ENCODE measurements at regions of chr2 and their contacts with region 1.

Region 1: DNA sequence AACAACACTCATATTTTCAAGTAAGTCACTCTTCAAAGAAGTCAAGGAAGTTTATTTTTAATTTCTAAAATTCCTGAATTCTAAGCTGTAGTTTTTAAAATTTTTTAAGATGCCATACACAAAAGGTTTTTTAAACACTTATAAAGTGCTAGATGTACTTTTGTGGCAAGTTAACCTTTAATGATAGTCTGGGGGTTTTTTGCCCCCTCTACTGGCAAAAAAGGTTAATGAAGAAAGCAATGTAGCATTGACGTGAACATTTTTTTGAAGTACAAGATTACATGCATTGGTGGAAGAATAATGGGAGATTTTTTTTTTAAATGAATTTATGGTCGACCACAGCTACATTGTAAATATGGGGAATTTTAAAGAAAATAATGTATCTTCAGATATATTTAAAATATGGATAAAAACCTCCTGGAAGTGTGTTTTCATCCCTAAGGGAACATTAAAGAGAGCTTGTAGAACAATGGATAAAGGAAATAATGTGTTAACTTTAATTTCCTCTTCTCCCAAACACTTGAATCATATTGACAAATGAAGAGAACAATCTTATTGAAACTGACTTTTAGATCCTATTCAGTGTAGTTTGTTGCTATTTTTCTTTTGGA is 12.6 kb downstream of the ITPRID2 start:
- DNase-seq: no peak
- ATAC-seq: no peak
- H3K4me3 ChIP-seq: no peak overlapping the region
- H3K27ac ChIP-seq: no peak overlapping the region
- H3K4me1 ChIP-seq: peaks cover 0 to 2% of the 10 kb centered on the region in 2 donors
- H3K27me3 ChIP-seq: no peaks in the 10 kb centered on the region

Region 2: GRCh38 chr2:181517685-181518301 is 386.3 kb before region 1 on chr2:
- intact Hi-C with region 1: no loop called
- DNase-seq: no peak
- ATAC-seq: no peak
- H3K4me3 ChIP-seq: no peak overlapping the region
- H3K27ac ChIP-seq: no peak overlapping the region
- H3K4me1 ChIP-seq: no peaks in the 10 kb centered on the region
- H3K27me3 ChIP-seq: no peaks in the 10 kb centered on the region

Region 3: GRCh38 chr2:181924336-181924735 is 20.2 kb after region 1 on chr2:
- intact Hi-C with region 1: no loop called
- DNase-seq: no peak
- ATAC-seq: no peak
- H3K4me3 ChIP-seq: no peak overlapping the region
- H3K27ac ChIP-seq: no peak overlapping the region
- H3K4me1 ChIP-seq: peaks cover 0 to 1% of the 10 kb centered on the region in 2 donors
- H3K27me3 ChIP-seq: no peaks in the 10 kb centered on the region

Region 4: GRCh38 chr2:182088681-182089320 is 184.7 kb after region 1 on chr2:
- intact Hi-C with region 1: loop called in 1 of 2 experiments (anchors 10 kb)
- DNase-seq: no peak
- ATAC-seq: no peak
- H3K4me3 ChIP-seq: no peak overlapping the region
- H3K27ac ChIP-seq: no peak overlapping the region
- H3K4me1 ChIP-seq: no peaks in the 10 kb centered on the region
- H3K27me3 ChIP-seq: no peaks in the 10 kb centered on the region

Measured in aorta (tissue), 5 donors.